Activated CD4-positive, alpha-beta T cell treated with anti-CD3 and anti-CD28 coated beads for 36 hours (primary cell): ENCODE measurements at regions of chr1 and their contacts with region 1.

Region 1: DNA sequence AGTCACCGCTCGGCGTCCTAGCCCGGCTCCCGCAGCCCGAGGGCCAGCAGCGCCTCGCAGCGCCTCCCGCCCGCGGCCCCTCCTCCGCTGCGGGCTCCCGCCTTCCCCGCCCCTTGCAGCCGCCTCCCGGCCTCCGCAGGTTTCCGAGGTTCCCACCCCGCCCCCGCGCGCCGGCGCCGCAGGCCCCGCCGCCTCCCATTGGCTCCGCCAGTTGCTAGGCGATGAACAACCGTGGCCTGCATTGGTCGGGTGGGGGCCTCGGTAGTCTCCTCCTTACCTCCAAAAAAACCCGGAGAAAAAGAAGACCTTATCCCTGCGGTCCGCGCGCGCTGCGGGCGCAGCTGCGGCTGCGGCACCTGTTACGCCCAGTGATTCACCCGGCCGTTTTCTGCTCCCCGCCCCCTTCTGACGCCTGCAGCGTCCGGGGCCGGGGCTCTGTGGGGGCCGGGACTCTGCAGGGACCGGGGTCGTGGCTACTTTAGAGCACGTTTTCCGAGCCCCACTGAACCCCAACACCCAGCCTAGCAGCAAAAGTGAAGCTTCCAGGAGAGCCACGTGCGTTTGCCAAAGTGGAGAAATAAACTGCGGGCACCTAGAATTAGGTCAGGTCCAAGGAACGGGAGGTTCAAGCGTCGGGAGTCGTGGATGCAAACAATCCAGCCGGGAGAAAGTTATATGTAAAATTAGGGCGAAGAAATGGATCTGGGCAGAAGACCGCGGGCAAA is at the start of gene SSX2IP:
- DNase-seq: peak; percentile 99
- ATAC-seq: peak; percentile 89
- H3K4me3 Mint-ChIP-seq: peak within 1 kb of the TSS; percentile 91
- H3K27ac Mint-ChIP-seq: peak within 1 kb of the TSS; percentile 85
- H3K4me1 Mint-ChIP-seq: peaks cover 57% of the 10 kb centered on the region
- H3K27me3 Mint-ChIP-seq: no peaks in the 10 kb centered on the region
- total RNA-seq, gene SSX2IP: 10.3 to 12.3 TPM

Region 2: GRCh38 chr1:84298328-84298683 is 392.3 kb before region 1 on chr1:
- CTCF ChIA-PET with region 1: no interaction called
- POLR2A ChIA-PET with region 1: no interaction called
- intact Hi-C with region 1: loop called in 1 of 2 experiments (anchors 1 kb)
- DNase-seq: peak; percentile 71
- ATAC-seq: peak; percentile 79
- H3K4me3 Mint-ChIP-seq: peak overlapping the region; percentile 78
- H3K27ac Mint-ChIP-seq: peak overlapping the region; percentile 71
- H3K4me1 Mint-ChIP-seq: peaks cover 34% of the 10 kb centered on the region
- H3K27me3 Mint-ChIP-seq: peaks cover 6% of the 10 kb centered on the region

Region 3: DNA sequence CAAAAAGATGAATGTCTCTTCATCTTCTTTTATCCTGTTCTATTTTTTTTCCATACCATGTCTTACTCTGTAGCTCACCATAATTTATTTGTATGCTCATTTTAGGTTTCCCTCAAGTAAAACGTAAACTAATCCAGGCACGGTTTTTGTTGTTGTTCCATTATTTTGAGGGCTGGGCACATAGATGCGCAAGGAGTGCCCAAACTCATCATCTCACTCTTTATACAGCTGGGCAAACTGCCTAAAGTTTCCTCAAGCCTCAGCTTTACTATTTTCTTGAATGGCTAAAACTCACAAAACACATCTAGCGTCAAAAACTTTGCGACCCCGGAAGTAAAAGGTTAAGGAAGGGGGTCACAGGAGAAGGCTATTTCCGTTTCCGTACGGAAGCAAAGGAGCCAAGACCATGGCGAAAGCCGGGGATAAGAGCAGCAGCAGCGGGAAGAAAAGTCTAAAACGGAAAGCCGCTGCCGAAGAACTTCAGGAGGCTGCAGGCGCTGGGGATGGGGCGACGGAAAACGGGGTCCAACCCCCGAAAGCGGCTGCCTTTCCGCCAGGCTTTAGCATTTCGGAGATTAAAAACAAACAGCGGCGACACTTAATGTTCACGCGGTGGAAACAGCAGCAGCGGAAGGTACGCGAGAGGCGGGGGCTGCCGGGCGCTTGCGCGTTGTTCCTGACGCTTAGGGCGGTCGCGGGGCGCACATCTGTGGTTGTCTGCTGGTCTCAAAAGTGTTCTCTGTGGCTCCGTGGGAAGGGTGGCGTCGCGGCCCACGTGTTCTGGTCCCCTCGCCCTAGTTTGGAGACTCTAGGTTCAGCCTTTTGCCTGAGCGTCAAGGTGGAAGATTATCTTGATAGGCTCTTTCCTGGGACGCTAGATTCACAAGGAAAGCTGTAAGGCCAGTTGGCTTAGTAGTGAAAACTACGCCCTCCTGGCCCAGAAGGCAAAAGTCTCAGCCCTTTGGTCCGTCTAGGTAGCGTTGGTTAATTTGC is 211.4 kb before region 1 on chr1 and contains the start of gene RPF1:
- CTCF ChIA-PET with region 1: no interaction called
- POLR2A ChIA-PET with region 1: no interaction called
- intact Hi-C with region 1: loop called in 1 of 2 experiments (anchors 1 kb)
- DNase-seq: peak; percentile 86
- ATAC-seq: peak; percentile 92
- H3K4me3 Mint-ChIP-seq: peak within 1 kb of the TSS; percentile 92
- H3K27ac Mint-ChIP-seq: peak within 1 kb of the TSS; percentile 98
- H3K4me1 Mint-ChIP-seq: peaks cover 40% of the 10 kb centered on the region
- H3K27me3 Mint-ChIP-seq: peaks cover 17% of the 10 kb centered on the region
- total RNA-seq, gene RPF1: 59.1 to 70.2 TPM

Region 4: GRCh38 chr1:84573967-84574842 is 116.4 kb before region 1 on chr1 and contains the start of gene CTBS:
- CTCF ChIA-PET with region 1: interaction called, 4 read pairs
- POLR2A ChIA-PET with region 1: no interaction called
- intact Hi-C with region 1: loop called (anchors 1 kb)
- DNase-seq: peak; percentile 94
- ATAC-seq: peak; percentile 85
- H3K4me3 Mint-ChIP-seq: peak within 1 kb of the TSS; percentile 97
- H3K27ac Mint-ChIP-seq: peak within 1 kb of the TSS; percentile 99
- H3K4me1 Mint-ChIP-seq: peaks cover 45% of the 10 kb centered on the region
- H3K27me3 Mint-ChIP-seq: no peaks in the 10 kb centered on the region
- total RNA-seq, gene CTBS: 13.5 to 17.3 TPM

Region 5: DNA sequence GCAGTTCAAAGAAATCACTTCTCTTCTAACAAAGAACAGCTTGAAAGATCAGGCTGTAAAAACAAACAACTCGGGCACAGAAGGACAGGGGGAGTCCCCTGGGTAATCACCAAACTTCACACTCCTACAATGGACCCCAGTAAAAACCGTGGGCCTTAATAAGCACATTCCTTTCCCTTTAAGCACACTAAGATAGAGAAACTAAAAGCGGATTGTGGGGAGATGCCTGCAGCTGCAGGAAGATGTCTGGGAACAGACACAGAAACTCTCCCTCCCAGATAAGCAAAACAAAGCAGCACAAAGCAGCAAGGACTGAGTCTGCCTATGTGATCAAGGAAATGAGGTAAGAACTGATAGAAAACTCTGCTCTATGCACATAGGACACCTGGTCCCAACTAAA is 78.8 kb before region 1 on chr1:
- CTCF ChIA-PET with region 1: no interaction called
- POLR2A ChIA-PET with region 1: no interaction called
- intact Hi-C with region 1: no loop called
- DNase-seq: no peak
- ATAC-seq: peak; percentile 44
- H3K4me3 Mint-ChIP-seq: no peak overlapping the region
- H3K27ac Mint-ChIP-seq: peak overlapping the region; percentile 23
- H3K4me1 Mint-ChIP-seq: peaks cover 9% of the 10 kb centered on the region
- H3K27me3 Mint-ChIP-seq: peaks cover 2% of the 10 kb centered on the region

Region 6: GRCh38 chr1:84704872-84705426 is 14.4 kb after region 1 on chr1:
- CTCF ChIA-PET with region 1: interaction called, 4 read pairs
- POLR2A ChIA-PET with region 1: no interaction called
- intact Hi-C with region 1: loop called in 1 of 2 experiments (anchors 1 kb)
- DNase-seq: no peak
- ATAC-seq: no peak
- H3K4me3 Mint-ChIP-seq: no peak overlapping the region
- H3K27ac Mint-ChIP-seq: no peak overlapping the region
- H3K4me1 Mint-ChIP-seq: peaks cover 6% of the 10 kb centered on the region
- H3K27me3 Mint-ChIP-seq: no peaks in the 10 kb centered on the region

Region 7: DNA sequence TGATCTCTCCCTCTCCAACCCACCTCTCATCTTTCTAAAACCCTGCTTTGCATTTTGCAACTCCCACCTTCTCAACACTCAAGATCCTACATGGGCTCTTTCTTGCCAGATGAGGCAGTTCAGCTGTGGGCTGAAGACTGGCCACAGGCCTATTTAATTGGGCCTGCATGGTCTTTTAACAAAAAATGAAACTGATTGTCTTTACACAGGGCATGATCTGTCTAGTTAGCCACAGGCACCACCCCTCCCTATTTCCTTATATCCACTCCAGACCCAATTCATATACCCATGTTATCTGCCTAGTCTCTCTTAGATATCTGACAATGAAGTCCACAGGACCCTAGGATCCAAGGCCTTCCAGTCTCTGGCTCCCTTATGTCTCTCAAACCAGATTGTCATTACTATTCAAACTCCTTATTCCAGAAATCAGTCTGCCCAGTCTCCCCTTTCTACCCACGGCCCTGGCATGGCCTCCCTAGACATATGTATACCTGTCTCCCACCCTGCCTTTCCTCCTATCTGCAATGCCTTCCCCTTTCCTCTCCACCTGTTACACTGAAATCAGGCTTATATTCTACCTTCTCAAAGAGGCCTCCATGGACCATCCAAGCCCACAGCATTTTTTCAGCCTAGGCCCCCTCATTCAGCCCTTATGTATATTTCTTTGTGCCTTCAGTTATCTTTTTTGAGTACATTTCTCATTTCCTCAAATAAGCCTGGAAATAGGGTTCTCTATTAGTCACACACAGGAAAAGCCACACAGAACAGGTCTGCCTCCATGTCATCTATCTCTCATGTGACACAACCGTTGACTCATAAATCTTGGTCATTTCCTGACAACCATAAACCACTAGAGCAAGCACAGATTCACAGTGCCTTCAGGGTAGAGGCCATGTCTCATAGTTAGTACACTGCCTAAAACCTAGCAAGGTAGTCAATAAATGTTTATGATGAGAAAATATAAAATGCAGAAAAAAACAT is 163.5 kb after region 1 on chr1:
- CTCF ChIA-PET with region 1: no interaction called
- POLR2A ChIA-PET with region 1: no interaction called
- intact Hi-C with region 1: loop called in 1 of 2 experiments (anchors 2 kb)
- DNase-seq: peak; percentile 49
- ATAC-seq: peak; percentile 100
- H3K4me3 Mint-ChIP-seq: no peak overlapping the region
- H3K27ac Mint-ChIP-seq: peak overlapping the region; percentile 77
- H3K4me1 Mint-ChIP-seq: peaks cover 33% of the 10 kb centered on the region
- H3K27me3 Mint-ChIP-seq: no peaks in the 10 kb centered on the region

Region 8: GRCh38 chr1:84907095-84907827 is 216.7 kb after region 1 on chr1:
- CTCF ChIA-PET with region 1: no interaction called
- POLR2A ChIA-PET with region 1: no interaction called
- intact Hi-C with region 1: no loop called
- DNase-seq: no peak
- ATAC-seq: peak; percentile 68
- H3K4me3 Mint-ChIP-seq: no peak overlapping the region
- H3K27ac Mint-ChIP-seq: no peak overlapping the region
- H3K4me1 Mint-ChIP-seq: peaks cover 7% of the 10 kb centered on the region
- H3K27me3 Mint-ChIP-seq: no peaks in the 10 kb centered on the region

Region 9: GRCh38 chr1:85297855-85298629 is 607.5 kb after region 1 on chr1:
- CTCF ChIA-PET with region 1: no interaction called
- POLR2A ChIA-PET with region 1: no interaction called
- intact Hi-C with region 1: loop called in 1 of 2 experiments (anchors 5 kb)
- DNase-seq: peak; percentile 88
- ATAC-seq: peak; percentile 93
- H3K4me3 Mint-ChIP-seq: peak overlapping the region; percentile 56
- H3K27ac Mint-ChIP-seq: peak overlapping the region; percentile 72
- H3K4me1 Mint-ChIP-seq: peaks cover 26% of the 10 kb centered on the region
- H3K27me3 Mint-ChIP-seq: peaks cover 30% of the 10 kb centered on the region

Region 10: DNA sequence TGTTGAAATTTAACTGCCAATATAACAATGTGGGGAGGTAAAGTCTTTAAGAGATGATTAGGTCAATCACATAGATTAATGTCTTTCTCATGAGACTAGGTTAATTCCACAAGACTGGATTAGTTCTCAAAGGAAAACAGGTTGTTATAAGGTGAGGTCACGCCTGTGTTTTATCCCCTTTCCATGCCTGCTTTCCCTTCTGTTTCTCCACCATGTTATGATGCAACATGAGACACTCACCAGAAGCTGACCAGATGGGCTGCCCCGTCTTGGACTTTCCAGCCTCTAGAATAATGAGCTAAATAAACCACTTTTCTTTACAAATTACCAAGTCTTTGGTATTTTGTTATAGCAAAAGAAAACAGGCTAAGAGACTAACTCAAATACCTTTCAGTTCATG is 703.6 kb after region 1 on chr1:
- CTCF ChIA-PET with region 1: no interaction called
- POLR2A ChIA-PET with region 1: no interaction called
- intact Hi-C with region 1: no loop called
- DNase-seq: no peak
- ATAC-seq: no peak
- H3K4me3 Mint-ChIP-seq: no peak overlapping the region
- H3K27ac Mint-ChIP-seq: no peak overlapping the region
- H3K4me1 Mint-ChIP-seq: no peaks in the 10 kb centered on the region
- H3K27me3 Mint-ChIP-seq: no peaks in the 10 kb centered on the region